Posterior cingulate gyrus (tissue), 11 donors: ENCODE measurements at regions of chr9 and their contacts with region 1.

Region 1: GRCh38 chr9:92634712-92635605 is 35.0 kb downstream of the IPPK start:
- DNase-seq: peak; percentile 57 to 96 (median 74)

Region 2: DNA sequence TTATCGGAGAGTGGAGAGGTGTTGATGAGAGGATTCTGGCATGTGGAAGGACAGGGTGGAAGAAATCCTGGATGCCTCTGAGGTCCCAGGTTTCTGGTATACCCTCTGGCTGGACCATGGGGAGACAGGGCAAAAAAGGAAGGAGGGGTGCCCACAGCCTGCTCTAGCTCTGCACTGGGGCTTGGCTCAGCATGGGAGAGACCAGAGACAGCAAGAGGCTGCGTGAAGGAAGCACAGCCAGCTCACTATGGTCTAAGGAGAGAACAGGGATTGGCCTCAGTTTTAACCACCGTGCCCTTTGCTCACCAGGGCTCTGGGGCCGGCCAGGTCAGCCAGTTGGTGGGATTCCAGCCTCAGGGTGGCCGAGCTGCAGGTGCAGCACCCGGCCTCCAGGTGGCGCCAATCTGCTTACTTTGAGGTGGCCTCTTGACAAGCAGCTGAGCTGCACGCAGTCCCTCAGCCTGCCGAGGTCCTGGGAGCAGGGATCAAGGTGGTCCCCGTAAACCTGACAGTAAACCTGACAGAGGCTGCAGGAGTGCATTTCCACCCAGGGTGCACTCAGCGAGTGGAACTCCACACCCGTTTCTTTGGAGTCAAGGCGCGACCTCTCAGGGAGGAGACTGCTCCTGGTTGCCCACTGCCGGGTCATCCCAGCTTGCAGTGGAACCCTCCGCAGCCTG is 494.7 kb before region 1 on chr9:
- intact Hi-C with region 1: loop called (anchors 2 kb)
- DNase-seq: peak in 9 of 10 donors; percentile 54 to 94 (median 68)

Region 3: DNA sequence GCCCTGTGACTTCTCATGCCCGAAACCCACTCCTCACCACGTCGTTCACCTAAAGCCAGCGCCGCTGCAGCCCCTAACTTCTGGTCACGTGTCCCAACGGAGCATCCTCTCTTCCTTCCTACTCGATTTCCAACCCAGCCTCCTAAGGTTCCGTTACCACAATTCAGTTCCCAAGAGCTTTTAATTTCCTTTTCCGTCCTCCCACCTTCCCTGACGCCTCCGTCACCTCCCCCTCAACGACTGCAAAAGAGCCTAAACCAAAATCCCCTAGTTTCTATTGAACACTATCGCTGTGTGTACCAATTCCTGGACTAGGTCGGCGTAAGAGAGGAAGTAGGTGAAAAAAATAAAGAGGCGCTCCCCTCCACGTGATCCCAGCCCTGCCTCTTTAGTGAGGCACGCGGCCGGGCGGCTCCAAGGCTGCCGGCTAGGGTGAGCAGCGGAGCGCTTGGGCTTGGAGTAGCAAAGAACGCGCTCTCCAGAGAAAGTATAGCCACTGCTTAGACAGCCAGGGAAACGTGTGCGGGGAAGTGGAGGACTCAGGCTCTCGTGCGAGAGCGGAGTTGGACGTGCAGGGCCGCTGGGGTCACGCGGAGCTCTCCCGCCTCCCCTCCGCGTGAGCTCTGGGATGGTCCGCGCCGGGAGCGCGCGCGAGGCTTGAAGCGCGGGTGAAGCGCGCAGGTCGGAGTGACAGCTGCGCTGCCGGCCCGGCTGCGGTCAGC is 309.5 kb before region 1 on chr9 and contains the starts of genes CENPP and NOL8:
- intact Hi-C with region 1: loop called (anchors 5 kb)
- DNase-seq: peak; percentile 77 to 97 (median 84)

Region 4: DNA sequence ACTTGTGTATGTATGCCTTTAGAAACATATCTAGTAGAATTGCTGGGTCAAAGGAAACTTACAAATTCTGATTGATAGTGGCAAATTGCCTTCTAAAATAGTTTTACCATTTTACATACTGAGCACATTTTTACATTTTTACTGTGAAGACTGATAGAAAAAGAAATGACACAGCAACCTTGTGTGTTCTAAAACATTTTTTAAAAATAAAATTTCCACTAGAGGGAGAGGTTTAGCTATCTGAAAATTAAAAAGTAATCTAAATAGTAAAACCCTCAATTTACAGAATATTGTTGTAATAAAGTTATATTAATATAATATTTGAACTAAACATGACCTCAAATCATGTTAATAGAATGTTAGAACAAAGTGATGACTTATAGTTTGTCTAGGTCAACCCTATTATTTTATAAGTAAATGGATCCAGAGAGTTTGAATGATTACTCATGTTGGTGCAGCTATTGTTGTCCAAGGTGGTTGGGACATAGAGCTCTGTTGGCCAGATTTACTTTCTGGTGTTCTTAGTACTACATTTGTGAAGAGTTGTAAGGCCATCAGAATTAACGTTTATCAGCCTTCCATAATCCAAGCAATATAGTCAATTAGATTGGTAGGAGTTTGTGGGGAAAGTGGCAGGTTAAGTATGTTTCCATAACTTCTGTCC is 292.0 kb before region 1 on chr9:
- intact Hi-C with region 1: loop called (anchors 5 kb)
- DNase-seq: no peak

Region 5: DNA sequence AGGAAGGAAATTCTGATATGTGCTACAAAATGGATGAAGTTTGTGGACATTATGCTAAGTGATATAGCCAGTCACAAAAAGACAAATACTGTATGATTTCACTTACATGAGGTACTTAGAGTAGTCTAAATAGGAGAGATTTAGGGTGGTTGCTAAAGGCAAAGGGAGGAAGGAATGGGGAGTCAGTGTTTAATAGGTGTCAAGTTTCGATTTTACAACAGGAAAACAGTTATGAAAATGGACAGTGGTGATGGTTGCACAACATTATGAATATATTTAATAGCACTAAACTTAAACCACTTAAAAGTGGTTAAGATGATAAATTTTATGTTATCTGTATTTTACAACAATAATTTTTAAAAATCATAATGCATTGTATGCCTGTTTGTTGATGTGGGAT is 58.8 kb before region 1 on chr9:
- intact Hi-C with region 1: no loop called
- DNase-seq: no peak